ENCODE measurements at regions of chr12 and their contacts with region 1.

Region 1: GRCh38 chr12:19683178-19683927 is 244.1 kb downstream of the AEBP2 start:
- DNase-seq: peak; percentile 99
- H3K4me3 ChIP-seq: no peak overlapping the region
- H3K27ac ChIP-seq: peak overlapping the region; percentile 97
- H3K4me1 ChIP-seq: peaks cover 28% of the 10 kb centered on the region
- H3K27me3 ChIP-seq: no peaks in the 10 kb centered on the region
- CTCF ChIP-seq: no peak
- POLR2A ChIP-seq: peak; percentile 48

Region 2: GRCh38 chr12:19456176-19456575 is 227.2 kb before region 1 on chr12:
- CTCF ChIA-PET with region 1: no interaction called
- POLR2A ChIA-PET with region 1: no interaction called
- dilution Hi-C with region 1: no loop called
- intact Hi-C with region 1: no loop called
- DNase-seq: no peak
- H3K4me3 ChIP-seq: no peak overlapping the region
- H3K27ac ChIP-seq: no peak overlapping the region
- H3K4me1 ChIP-seq: no peaks in the 10 kb centered on the region
- H3K27me3 ChIP-seq: no peaks in the 10 kb centered on the region
- CTCF ChIP-seq: no peak
- POLR2A ChIP-seq: no peak

Region 3: GRCh38 chr12:19694627-19695026 is 11.3 kb after region 1 on chr12:
- CTCF ChIA-PET with region 1: interaction called, 6 read pairs
- POLR2A ChIA-PET with region 1: no interaction called
- dilution Hi-C with region 1: no loop called
- intact Hi-C with region 1: loop called (anchors 1 kb)
- DNase-seq: no peak
- H3K4me3 ChIP-seq: no peak overlapping the region
- H3K27ac ChIP-seq: peak overlapping the region; percentile 58
- H3K4me1 ChIP-seq: peaks cover 20% of the 10 kb centered on the region
- H3K27me3 ChIP-seq: no peaks in the 10 kb centered on the region
- CTCF ChIP-seq: no peak
- POLR2A ChIP-seq: no peak

Region 4: DNA sequence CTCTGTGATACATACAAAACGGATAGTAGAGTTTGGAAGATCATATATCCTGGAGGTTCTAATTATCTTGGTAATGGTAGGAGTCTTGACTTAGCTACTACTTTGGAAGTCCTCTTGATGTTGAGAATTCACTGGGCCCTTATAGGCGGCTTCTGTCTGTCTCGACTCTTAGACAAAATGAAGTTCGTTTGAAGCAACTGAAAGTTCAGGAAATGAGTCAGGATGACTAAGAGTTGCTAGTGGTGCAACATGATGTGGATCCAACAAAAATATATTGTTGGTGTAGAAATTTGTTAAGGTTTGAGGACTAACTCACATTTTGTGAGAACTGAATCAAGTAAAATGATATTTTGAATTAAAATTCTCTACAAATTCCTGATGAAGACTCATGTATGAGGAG is 28.7 kb after region 1 on chr12:
- CTCF ChIA-PET with region 1: interaction called, 4 read pairs
- POLR2A ChIA-PET with region 1: no interaction called
- dilution Hi-C with region 1: no loop called
- intact Hi-C with region 1: loop called (anchors 1 kb)
- DNase-seq: peak; percentile 70
- H3K4me3 ChIP-seq: no peak overlapping the region
- H3K27ac ChIP-seq: peak overlapping the region; percentile 67
- H3K4me1 ChIP-seq: peaks cover 13% of the 10 kb centered on the region
- H3K27me3 ChIP-seq: no peaks in the 10 kb centered on the region
- CTCF ChIP-seq: no peak
- POLR2A ChIP-seq: no peak

Region 5: DNA sequence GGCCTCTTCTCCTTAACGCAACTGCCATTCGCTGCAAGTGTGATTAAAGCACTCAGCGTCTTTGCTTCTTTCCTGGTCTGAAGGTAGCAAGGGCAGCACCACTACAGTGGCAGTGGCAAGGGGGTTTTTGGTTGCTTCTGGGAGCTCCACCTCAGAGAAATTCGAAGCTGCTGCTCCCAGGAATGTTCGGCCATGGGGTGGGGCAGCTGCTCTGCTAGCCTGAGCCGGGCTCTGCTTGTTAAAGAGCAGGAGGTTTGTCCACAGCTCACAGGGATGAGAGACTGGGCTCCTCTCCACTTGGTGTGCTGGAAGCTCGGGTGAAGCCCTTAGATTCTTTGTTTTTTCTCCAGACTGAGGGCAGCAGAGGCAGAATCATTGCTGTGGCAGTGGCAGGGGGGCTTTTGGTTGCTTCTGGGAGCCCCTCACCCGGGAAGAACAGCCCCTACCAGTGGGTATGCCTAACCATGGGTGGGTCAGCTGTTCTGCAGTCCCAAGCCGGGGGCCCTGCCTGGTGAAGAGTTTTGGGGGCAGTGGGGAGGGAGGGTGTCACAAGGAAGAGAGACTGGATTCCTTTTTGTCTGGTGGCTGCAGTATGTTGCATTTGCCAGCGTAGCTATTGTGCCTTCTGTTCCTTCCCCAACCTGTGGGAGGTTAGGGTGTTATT is 96.2 kb after region 1 on chr12:
- CTCF ChIA-PET with region 1: no interaction called
- POLR2A ChIA-PET with region 1: no interaction called
- dilution Hi-C with region 1: no loop called
- intact Hi-C with region 1: no loop called
- DNase-seq: no peak
- H3K4me3 ChIP-seq: no peak overlapping the region
- H3K27ac ChIP-seq: no peak overlapping the region
- H3K4me1 ChIP-seq: peaks cover 12% of the 10 kb centered on the region
- H3K27me3 ChIP-seq: no peaks in the 10 kb centered on the region
- CTCF ChIP-seq: no peak
- POLR2A ChIP-seq: no peak

Region 6: DNA sequence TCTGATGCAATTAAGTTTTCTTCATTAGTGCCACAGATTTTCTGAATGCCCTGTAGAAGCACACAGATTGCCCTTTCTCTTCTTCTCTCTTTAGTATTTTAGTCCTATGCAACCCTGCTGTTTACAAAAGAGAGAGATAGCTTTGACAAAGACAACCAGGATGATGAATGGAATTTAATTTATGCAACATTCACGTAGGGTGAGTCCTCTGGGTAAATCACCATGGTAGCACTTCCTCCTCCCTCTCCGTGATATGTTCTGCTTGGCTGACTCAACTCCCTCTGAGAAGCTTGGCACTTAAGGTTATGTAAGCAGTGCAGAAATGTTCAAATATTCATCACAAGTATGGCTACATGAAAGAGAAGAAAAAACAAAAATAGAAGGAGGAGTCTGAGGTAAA is 284.1 kb after region 1 on chr12:
- CTCF ChIA-PET with region 1: no interaction called
- POLR2A ChIA-PET with region 1: no interaction called
- dilution Hi-C with region 1: no loop called
- intact Hi-C with region 1: loop called (anchors 5 kb)
- DNase-seq: peak; percentile 85
- H3K4me3 ChIP-seq: no peak overlapping the region
- H3K27ac ChIP-seq: peak overlapping the region; percentile 65
- H3K4me1 ChIP-seq: peaks cover 43% of the 10 kb centered on the region
- H3K27me3 ChIP-seq: no peaks in the 10 kb centered on the region
- CTCF ChIP-seq: no peak
- POLR2A ChIP-seq: no peak

Measured in endothelial cell of umbilical vein (primary cell).